ENCODE measurements at regions of chr9 and their contacts with region 1.

Region 1: GRCh38 chr9:19320495-19320894 is 59.5 kb downstream of the RPS6 start:
- H3K4me3 Mint-ChIP-seq: no peak overlapping the region
- H3K27ac Mint-ChIP-seq: no peak overlapping the region
- H3K4me1 Mint-ChIP-seq: no peaks in the 10 kb centered on the region
- H3K27me3 Mint-ChIP-seq: no peaks in the 10 kb centered on the region

Region 2: GRCh38 chr9:19208695-19209137 is 111.8 kb before region 1 on chr9:
- intact Hi-C with region 1: no loop called
- H3K4me3 Mint-ChIP-seq: no peak overlapping the region
- H3K27ac Mint-ChIP-seq: no peak overlapping the region
- H3K4me1 Mint-ChIP-seq: no peaks in the 10 kb centered on the region
- H3K27me3 Mint-ChIP-seq: no peaks in the 10 kb centered on the region

Region 3: DNA sequence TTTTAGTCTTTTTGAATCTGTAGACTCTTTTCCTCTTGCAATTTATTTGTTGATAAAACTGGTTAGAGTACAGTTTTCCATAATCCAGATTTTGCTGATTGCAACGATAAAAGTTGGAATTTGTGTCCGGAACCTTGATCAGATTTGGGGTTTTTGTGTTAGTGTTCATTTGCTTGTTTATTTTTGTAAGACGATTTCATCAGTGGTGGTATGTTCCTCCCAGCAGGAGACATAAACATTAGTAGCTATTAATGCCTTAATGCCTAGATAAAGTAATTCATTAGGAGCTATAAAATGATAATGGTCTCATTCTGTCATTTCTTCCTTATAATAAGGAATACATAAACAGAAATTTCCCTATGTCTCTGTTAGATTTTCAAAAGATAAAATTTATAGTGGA is 38.2 kb after region 1 on chr9:
- intact Hi-C with region 1: loop called (anchors 5 kb)
- H3K4me3 Mint-ChIP-seq: no peak overlapping the region
- H3K27ac Mint-ChIP-seq: no peak overlapping the region
- H3K4me1 Mint-ChIP-seq: no peaks in the 10 kb centered on the region
- H3K27me3 Mint-ChIP-seq: no peaks in the 10 kb centered on the region

Measured in dendritic cell treated with granulocyte-macrophage colony-stimulating factor and Interleukin-4, amounts not matched to agents 40 ng/mL and 50 ng/mL, for 4 days (primary cell).